ENCODE measurements at regions of chr13 and their contacts with region 1.

Region 1: DNA sequence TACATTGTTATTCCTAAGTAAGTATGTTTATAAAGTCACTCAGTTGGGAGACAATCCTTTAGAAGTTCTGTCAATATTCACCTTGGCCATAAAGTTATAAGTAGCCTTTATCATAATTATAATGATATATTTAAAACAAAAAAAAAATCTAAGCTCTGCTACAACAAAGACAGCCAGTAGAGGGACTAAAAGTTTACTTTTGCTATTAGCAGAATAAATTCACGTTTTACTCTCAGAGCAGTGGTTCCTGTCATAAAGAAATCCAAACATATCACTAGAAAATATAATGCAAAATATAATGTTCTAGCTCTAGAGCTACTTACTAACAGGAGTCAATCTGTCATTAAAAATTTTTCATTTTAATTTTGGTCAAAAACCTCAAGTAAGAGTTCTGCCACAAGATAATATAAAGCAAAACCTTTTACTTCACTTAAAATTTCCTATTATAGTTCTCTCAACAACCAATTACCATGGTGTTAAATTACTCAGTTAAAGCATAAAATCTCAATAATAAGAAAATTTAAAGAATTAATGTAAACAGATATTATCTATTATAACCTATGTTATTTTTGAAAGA is 17.7 kb downstream of the INTS6 start:
- DNase-seq: no peak
- H3K4me3 ChIP-seq: no peak overlapping the region
- CTCF ChIP-seq: peak; percentile 35

Region 2: GRCh38 chr13:51134763-51135365 is 300.2 kb before region 1 on chr13:
- in situ Hi-C with region 1: no loop called
- DNase-seq: no peak
- H3K4me3 ChIP-seq: no peak overlapping the region
- CTCF ChIP-seq: no peak

Region 3: GRCh38 chr13:51479199-51479523 is 44.1 kb after region 1 on chr13:
- in situ Hi-C with region 1: no loop called
- DNase-seq: no peak
- H3K4me3 ChIP-seq: no peak overlapping the region
- CTCF ChIP-seq: no peak

Region 4: GRCh38 chr13:51797664-51798488 is 362.8 kb after region 1 on chr13:
- in situ Hi-C with region 1: loop called (anchors 25 kb)
- DNase-seq: peak; percentile 37
- H3K4me3 ChIP-seq: no peak overlapping the region
- CTCF ChIP-seq: peak; percentile 53

Measured in astrocyte of the cerebellum (primary cell).